CD4-positive, alpha-beta memory T cell (primary cell): ENCODE measurements at regions of chr2 and their contacts with region 1.

Region 1: GRCh38 chr2:161136696-161137324 is 23.4 kb upstream of the TANK start:
- DNase-seq: peak; percentile 70 to 82 (median 74)
- H3K4me3 ChIP-seq: peak overlapping the region; percentile 48 to 90
- H3K4me3 Mint-ChIP-seq: peak overlapping the region; percentile 90 to 99 (median 95)
- H3K27ac ChIP-seq: peak overlapping the region; percentile 97
- H3K27ac Mint-ChIP-seq: peak overlapping the region; percentile 97 to 99 (median 99)
- H3K4me1 ChIP-seq: peaks cover 40% of the 10 kb centered on the region
- H3K4me1 Mint-ChIP-seq: peaks cover 34 to 55% (median 39%) of the 10 kb centered on the region in 4 donors
- H3K27me3 ChIP-seq: no peaks in the 10 kb centered on the region
- H3K27me3 Mint-ChIP-seq: no peaks in the 10 kb centered on the region

Region 2: GRCh38 chr2:161077367-161078210 is 59.2 kb before region 1 on chr2:
- CTCF ChIA-PET with region 1: no interaction called
- POLR2A ChIA-PET with region 1: interaction called, 6 read pairs
- intact Hi-C with region 1: loop called (anchors 5 kb)
- DNase-seq: peak; percentile 69 to 86 (median 76)
- H3K4me3 ChIP-seq: peak overlapping the region in 1 of 2 donors; percentile 16
- H3K4me3 Mint-ChIP-seq: peak overlapping the region; percentile 3 to 72 (median 64)
- H3K27ac ChIP-seq: peak overlapping the region; percentile 6
- H3K27ac Mint-ChIP-seq: peak overlapping the region; percentile 55 to 90 (median 84)
- H3K4me1 ChIP-seq: peaks cover 31% of the 10 kb centered on the region
- H3K4me1 Mint-ChIP-seq: peaks cover 23 to 42% (median 29%) of the 10 kb centered on the region in 4 donors
- H3K27me3 ChIP-seq: no peaks in the 10 kb centered on the region
- H3K27me3 Mint-ChIP-seq: no peaks in the 10 kb centered on the region

Region 3: GRCh38 chr2:161152302-161152701 is 15.5 kb after region 1 on chr2:
- CTCF ChIA-PET with region 1: interaction called, 6 read pairs
- POLR2A ChIA-PET with region 1: interaction called, 14 read pairs
- intact Hi-C with region 1: no loop called
- DNase-seq: no peak
- H3K4me3 ChIP-seq: no peak overlapping the region
- H3K4me3 Mint-ChIP-seq: no peak overlapping the region
- H3K27ac ChIP-seq: no peak overlapping the region
- H3K27ac Mint-ChIP-seq: no peak overlapping the region
- H3K4me1 ChIP-seq: peaks cover 4% of the 10 kb centered on the region
- H3K4me1 Mint-ChIP-seq: peaks cover 17 to 51% (median 35%) of the 10 kb centered on the region in 4 donors
- H3K27me3 ChIP-seq: no peaks in the 10 kb centered on the region
- H3K27me3 Mint-ChIP-seq: no peaks in the 10 kb centered on the region